ENCODE measurements at regions of chr3 and their contacts with region 1.

Region 1: DNA sequence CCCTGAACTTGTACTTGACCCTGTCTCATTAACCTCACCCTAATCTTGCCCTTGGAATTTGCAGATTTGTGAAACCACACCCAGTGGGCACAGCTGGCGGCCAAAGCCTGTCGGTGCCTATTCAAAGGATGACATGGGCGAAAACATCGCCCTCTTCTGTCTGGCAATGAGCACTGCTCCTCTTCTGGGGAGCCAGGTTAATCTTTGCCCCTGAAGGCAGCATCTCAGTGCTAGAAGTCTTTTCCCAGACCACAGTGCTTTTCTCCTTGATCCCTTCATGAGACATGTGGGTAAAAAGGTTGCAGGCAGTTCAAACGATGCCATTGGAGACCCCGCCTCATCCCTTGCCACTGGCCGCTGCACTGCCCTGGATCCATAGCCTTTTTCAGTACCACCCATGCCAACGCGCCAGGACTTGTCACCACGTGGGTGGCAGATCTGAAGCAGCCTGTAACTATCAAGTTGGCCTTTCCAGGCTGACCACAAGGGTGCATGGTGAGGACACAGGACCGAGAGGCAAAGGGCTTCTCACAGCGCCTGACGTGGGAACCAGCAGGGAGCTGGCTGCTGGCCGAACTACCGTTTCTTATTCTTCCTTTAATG is 6.5 kb upstream of the DNASE1L3 start:
- DNase-seq: peak; percentile 84
- ATAC-seq: peak; percentile 60
- H3K4me3 ChIP-seq: peak overlapping the region in 4 of 5 experiments; percentile 34 to 61 (median 48)
- H3K4me3 Mint-ChIP-seq: peak overlapping the region; percentile 79
- H3K27ac ChIP-seq: peak overlapping the region in 1 of 2 donors; percentile 52
- H3K27ac Mint-ChIP-seq: peak overlapping the region; percentile 69
- H3K4me1 ChIP-seq: peaks cover 52 to 58% of the 10 kb centered on the region in 2 donors
- H3K4me1 Mint-ChIP-seq: peaks cover 49% of the 10 kb centered on the region
- H3K27me3 ChIP-seq: no peaks in the 10 kb centered on the region
- H3K27me3 Mint-ChIP-seq: no peaks in the 10 kb centered on the region
- CTCF ChIP-seq: peak; percentile 97

Region 2: GRCh38 chr3:58200846-58201355 is 16.4 kb before region 1 on chr3:
- CTCF ChIA-PET with region 1: interaction called, 57 read pairs
- POLR2A ChIA-PET with region 1: interaction called, 23 read pairs
- intact Hi-C with region 1: loop called (anchors 1 kb)
- DNase-seq: peak; percentile 44
- ATAC-seq: no peak
- H3K4me3 ChIP-seq: peak overlapping the region in 3 of 5 experiments; percentile 25 to 43 (median 41)
- H3K4me3 Mint-ChIP-seq: peak overlapping the region; percentile 76
- H3K27ac ChIP-seq: peak overlapping the region; percentile 51 to 57
- H3K27ac Mint-ChIP-seq: peak overlapping the region; percentile 87
- H3K4me1 ChIP-seq: peaks cover 69 to 74% of the 10 kb centered on the region in 2 donors
- H3K4me1 Mint-ChIP-seq: peaks cover 67% of the 10 kb centered on the region
- H3K27me3 ChIP-seq: no peaks in the 10 kb centered on the region
- H3K27me3 Mint-ChIP-seq: no peaks in the 10 kb centered on the region
- CTCF ChIP-seq: no peak

Region 3: GRCh38 chr3:58206406-58207011 is 10.8 kb before region 1 on chr3:
- CTCF ChIA-PET with region 1: interaction called, 57 read pairs
- POLR2A ChIA-PET with region 1: interaction called, 11 read pairs
- intact Hi-C with region 1: no loop called
- DNase-seq: no peak
- ATAC-seq: no peak
- H3K4me3 ChIP-seq: no peak overlapping the region
- H3K4me3 Mint-ChIP-seq: no peak overlapping the region
- H3K27ac ChIP-seq: no peak overlapping the region
- H3K27ac Mint-ChIP-seq: no peak overlapping the region
- H3K4me1 ChIP-seq: peaks cover 23 to 27% of the 10 kb centered on the region in 2 donors
- H3K4me1 Mint-ChIP-seq: peaks cover 30% of the 10 kb centered on the region
- H3K27me3 ChIP-seq: no peaks in the 10 kb centered on the region
- H3K27me3 Mint-ChIP-seq: no peaks in the 10 kb centered on the region
- CTCF ChIP-seq: no peak

Region 4: DNA sequence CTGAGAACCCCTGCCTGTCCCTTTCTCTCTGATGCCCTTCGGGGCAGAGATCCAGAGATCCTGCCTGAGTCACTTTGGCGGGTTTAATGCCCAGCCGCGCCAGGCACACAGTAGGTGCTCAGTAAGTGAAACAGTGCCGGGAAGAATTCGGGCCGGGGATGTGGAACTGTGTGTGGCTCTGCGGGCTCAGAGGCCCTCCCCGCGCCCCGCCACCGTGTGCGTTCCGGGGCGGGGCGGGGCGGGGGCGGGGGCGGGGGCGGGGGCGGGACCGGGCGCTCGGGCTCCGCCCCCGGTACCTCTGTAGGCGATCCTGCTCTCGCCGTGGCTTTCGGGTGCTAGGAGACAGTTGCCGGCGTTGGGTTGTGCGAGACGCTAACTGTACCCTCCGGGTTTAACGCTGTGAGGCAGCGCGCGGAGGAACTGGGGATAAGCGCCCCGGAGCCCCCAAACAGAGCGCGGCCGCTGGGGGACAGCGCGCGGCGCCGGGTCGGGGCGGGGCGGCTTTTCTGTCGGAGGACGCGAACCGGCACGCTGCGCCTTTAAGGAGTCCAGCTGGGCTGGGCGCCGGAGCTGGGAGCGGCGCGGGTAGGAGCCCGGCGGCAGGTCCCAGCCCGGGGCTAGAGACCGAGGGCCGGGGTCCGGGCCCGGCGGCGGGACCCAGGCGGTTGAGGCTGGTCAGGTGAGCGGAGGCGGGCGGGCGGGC is 20.1 kb after region 1 on chr3 and contains the start of gene ABHD6:
- CTCF ChIA-PET with region 1: interaction called, 94 read pairs
- POLR2A ChIA-PET with region 1: interaction called, 6 read pairs
- intact Hi-C with region 1: loop called (anchors 1 kb)
- DNase-seq: peak; percentile 93
- ATAC-seq: peak; percentile 75
- H3K4me3 ChIP-seq: peak within 1 kb of the TSS; percentile 51 to 96 (median 93)
- H3K4me3 Mint-ChIP-seq: peak within 1 kb of the TSS; percentile 97
- H3K27ac ChIP-seq: peak within 1 kb of the TSS; percentile 63 to 86
- H3K27ac Mint-ChIP-seq: peak within 1 kb of the TSS; percentile 94
- H3K4me1 ChIP-seq: peaks cover 41 to 48% of the 10 kb centered on the region in 2 donors
- H3K4me1 Mint-ChIP-seq: peaks cover 70% of the 10 kb centered on the region
- H3K27me3 ChIP-seq: no peaks in the 10 kb centered on the region
- H3K27me3 Mint-ChIP-seq: no peaks in the 10 kb centered on the region
- CTCF ChIP-seq: peak; percentile 15
- total RNA-seq, gene ABHD6: 22.2 and 24.2 TPM in 2 replicates

Region 5: DNA sequence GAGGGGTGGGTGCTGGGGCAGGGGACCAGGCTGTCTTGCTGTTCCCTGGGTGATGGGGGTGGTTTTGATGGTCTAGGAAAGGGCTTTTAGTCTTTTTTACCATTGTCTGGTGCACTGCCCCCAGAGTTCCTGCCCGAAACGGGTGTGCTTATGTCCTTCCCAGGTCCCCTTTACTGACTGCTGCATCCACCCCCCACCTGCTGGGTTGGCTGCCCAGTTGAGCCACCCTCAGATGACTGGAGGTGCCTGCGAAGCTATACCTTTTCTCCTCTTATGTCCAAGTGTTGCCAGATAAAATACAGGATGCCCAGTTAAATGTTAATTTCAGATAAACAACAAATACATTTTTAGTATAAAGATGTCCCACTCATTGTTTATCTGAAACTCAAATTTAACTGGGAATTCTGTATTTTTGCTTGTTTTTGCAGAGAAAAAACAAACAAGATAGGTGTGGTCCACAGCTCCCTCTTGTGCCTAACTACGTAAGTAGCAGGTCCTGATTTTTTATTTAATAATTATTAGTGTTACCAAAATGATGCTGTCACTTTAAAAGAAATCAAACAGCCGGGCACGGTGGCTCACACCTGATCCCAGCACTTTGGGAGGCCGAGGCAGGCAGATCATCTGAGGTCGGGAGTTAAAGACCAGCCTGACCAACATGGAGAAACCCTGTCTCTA is 82.7 kb after region 1 on chr3:
- CTCF ChIA-PET with region 1: interaction called, 42 read pairs
- POLR2A ChIA-PET with region 1: no interaction called
- intact Hi-C with region 1: no loop called
- DNase-seq: peak; percentile 50
- ATAC-seq: no peak
- H3K4me3 ChIP-seq: no peak overlapping the region
- H3K4me3 Mint-ChIP-seq: no peak overlapping the region
- H3K27ac ChIP-seq: no peak overlapping the region
- H3K27ac Mint-ChIP-seq: no peak overlapping the region
- H3K4me1 ChIP-seq: no peaks in the 10 kb centered on the region
- H3K4me1 Mint-ChIP-seq: no peaks in the 10 kb centered on the region
- H3K27me3 ChIP-seq: no peaks in the 10 kb centered on the region
- H3K27me3 Mint-ChIP-seq: no peaks in the 10 kb centered on the region
- CTCF ChIP-seq: peak; percentile 65

Region 6: DNA sequence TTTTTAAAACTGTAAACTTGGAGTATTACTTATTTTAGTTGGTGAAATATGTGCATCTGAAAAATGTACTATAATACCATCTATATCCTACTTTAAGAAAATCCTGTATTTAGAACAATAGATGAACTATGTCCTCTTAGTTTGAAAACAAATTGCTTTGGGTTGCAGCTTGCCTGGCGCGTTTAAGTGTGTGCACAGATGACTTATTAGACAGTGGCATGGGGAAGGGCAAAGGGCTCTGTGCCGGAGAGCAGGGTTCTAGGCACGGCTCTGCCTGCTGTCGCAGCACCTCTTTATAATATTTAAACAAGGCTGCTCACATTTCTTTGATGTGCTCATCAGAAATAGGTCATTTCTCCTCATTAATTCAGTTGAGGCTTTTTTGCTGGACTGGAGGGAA is 125.4 kb after region 1 on chr3:
- CTCF ChIA-PET with region 1: no interaction called
- POLR2A ChIA-PET with region 1: no interaction called
- intact Hi-C with region 1: no loop called
- DNase-seq: no peak
- ATAC-seq: no peak
- H3K4me3 ChIP-seq: no peak overlapping the region
- H3K4me3 Mint-ChIP-seq: peak overlapping the region; percentile 17
- H3K27ac ChIP-seq: peak overlapping the region in 1 of 2 donors; percentile 85
- H3K27ac Mint-ChIP-seq: peak overlapping the region; percentile 75
- H3K4me1 ChIP-seq: peaks cover 84 to 88% of the 10 kb centered on the region in 2 donors
- H3K4me1 Mint-ChIP-seq: peaks cover 72% of the 10 kb centered on the region
- H3K27me3 ChIP-seq: no peaks in the 10 kb centered on the region
- H3K27me3 Mint-ChIP-seq: no peaks in the 10 kb centered on the region
- CTCF ChIP-seq: no peak

Measured in B cell (primary cell).